H1 (cell line): ENCODE measurements at regions of chr22 and their contacts with region 1.

Region 1: DNA sequence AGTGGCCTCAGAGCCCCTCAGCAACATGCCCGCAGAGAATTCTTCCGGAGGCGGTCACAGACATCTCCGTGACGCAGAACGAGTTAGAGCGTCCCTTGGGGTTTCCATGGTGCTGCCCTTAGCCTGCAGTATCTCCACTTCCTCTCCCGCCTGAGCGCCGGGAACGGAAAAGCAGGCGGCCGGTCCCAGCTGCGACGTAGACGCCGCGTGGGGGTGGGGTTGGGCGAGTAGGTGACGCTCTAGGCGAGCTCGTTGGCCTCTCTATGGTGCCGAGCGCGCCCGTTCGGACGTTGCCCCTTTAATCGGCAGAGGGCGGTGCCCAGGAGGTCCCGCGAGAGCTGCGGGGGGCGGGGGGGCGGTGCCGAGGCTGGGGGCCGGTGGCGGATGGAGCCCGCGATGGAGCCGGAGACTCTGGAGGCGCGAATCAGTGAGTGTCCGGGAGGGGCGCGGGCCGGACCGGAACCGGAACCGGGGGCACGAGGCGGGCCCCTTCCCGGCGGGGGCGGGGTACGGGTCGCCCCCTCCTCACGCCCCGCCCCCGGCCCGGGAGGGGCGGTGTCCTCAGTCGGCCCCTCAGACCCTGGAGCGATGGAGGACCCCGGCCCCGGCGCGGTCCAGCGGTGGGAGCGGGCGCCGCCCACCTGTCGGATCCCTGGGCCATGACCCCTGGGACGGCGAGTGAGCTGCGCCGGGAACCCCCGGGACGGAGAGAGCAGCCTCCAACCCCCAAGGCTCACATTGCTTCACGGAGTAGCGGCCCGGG is at the start of gene GGA1:
- DNase-seq: peak; percentile 83 to 90
- H3K4me3 ChIP-seq: peak within 1 kb of the TSS; percentile 69 to 91 (median 82)
- H3K27ac ChIP-seq: peak within 1 kb of the TSS; percentile 93
- H3K4me1 ChIP-seq: peaks cover 0 to 8% (median 6%) of the 10 kb centered on the region in 4 experiments; a peak in 6 of 7 replicates
- H3K27me3 ChIP-seq: no peaks in the 10 kb centered on the region
- CTCF ChIP-seq: no peak; a peak in 1 of 4 replicates
- EP300 ChIP-seq: 0 out of 3 replicates have a peak, but pooled peaks of 1 of the 2 experiments have one; percentile 9
- POLR2A ChIP-seq: peak; percentile 35 to 83
- RAD21 ChIP-seq: no peak
- total RNA-seq, gene GGA1: 46.5 and 49.3 TPM in 2 replicates

Region 2: GRCh38 chr22:37538590-37539357 is 69.9 kb before region 1 on chr22:
- CTCF ChIA-PET with region 1: interaction called, 16 read pairs
- POLR2A ChIA-PET with region 1: interaction called, 3 read pairs
- DNase-seq: peak; percentile 88 to 95
- H3K4me3 ChIP-seq: no peak overlapping the region
- H3K27ac ChIP-seq: no peak overlapping the region
- H3K4me1 ChIP-seq: peaks cover 0 to 4% (median 0%) of the 10 kb centered on the region in 4 experiments; a peak in 2 of 7 replicates
- H3K27me3 ChIP-seq: no peaks in the 10 kb centered on the region; a peak in 1 of 7 replicates
- CTCF ChIP-seq: peak; percentile 99 to 100 (median 99)
- EP300 ChIP-seq: no peak
- POLR2A ChIP-seq: no peak
- RAD21 ChIP-seq: peak; percentile 100

Region 3: DNA sequence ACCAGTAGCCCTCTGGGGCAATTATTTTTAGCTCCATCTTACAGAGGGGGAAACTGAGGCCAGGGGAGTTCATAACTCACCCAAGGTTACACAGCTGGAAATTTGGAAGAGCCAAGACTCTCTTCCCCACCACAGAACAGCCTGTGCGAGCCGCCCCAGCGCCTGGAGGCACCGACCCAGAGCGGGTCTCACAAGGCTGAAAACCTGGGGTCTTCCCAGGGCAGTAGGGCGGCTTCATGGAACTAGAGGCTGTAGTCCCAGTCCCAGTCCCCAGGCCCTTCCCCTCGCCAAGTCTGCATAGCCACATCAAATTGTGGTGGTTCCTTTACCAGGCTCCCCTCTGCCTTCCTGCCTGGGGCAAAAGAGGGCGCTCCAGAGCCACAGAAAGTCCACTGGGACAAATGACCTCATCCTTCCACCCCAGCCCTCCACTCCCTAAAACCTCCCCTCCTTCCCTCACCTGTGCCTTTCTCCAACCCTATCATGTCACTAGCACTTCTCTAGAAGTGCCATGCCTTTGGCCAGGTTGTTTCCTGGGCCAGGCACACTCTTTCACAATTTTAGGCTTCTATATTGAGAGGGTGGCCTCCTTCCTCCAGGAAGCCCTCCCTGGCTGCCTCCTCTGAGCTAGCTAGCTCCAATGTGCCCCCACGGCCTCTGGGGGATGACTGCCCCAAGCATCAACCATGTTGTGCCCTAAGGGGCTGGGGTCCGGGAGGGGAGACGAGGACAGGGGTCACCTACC is 63.5 kb before region 1 on chr22:
- CTCF ChIA-PET with region 1: interaction called, 16 read pairs
- POLR2A ChIA-PET with region 1: interaction called, 5 read pairs
- DNase-seq: peak; percentile 61 to 95
- H3K4me3 ChIP-seq: peak overlapping the region in 3 of 4 experiments; percentile 15 to 57 (median 24); a peak in 4 of 8 replicates
- H3K27ac ChIP-seq: peak overlapping the region; percentile 49; the same call in 1 of the 2 replicates
- H3K4me1 ChIP-seq: peaks cover 5 to 17% (median 11%) of the 10 kb centered on the region in 4 experiments
- H3K27me3 ChIP-seq: no peaks in the 10 kb centered on the region; a peak in 1 of 7 replicates
- CTCF ChIP-seq: peak; percentile 86 to 96 (median 89)
- EP300 ChIP-seq: no peak
- POLR2A ChIP-seq: no peak
- RAD21 ChIP-seq: peak; percentile 90 to 91

Region 4: GRCh38 chr22:37594237-37594636 is 14.4 kb before region 1 on chr22:
- CTCF ChIA-PET with region 1: interaction called, 35 read pairs
- POLR2A ChIA-PET with region 1: interaction called, 12 read pairs
- DNase-seq: no peak
- H3K4me3 ChIP-seq: no peak overlapping the region
- H3K27ac ChIP-seq: no peak overlapping the region
- H3K4me1 ChIP-seq: no peaks in the 10 kb centered on the region
- H3K27me3 ChIP-seq: no peaks in the 10 kb centered on the region
- CTCF ChIP-seq: peak in 2 of 3 experiments; percentile 29 to 33; a peak in 2 of 4 replicates
- EP300 ChIP-seq: no peak
- POLR2A ChIP-seq: no peak
- RAD21 ChIP-seq: no peak

Region 5: GRCh38 chr22:37623075-37624016 is 14.7 kb after region 1 on chr22:
- CTCF ChIA-PET with region 1: interaction called, 11 read pairs
- POLR2A ChIA-PET with region 1: interaction called, 63 read pairs
- DNase-seq: peak in 1 of 2 experiments; percentile 95
- H3K4me3 ChIP-seq: no peak overlapping the region
- H3K27ac ChIP-seq: no peak overlapping the region
- H3K4me1 ChIP-seq: peaks cover 0 to 3% (median 0%) of the 10 kb centered on the region in 4 experiments; a peak in 3 of 7 replicates
- H3K27me3 ChIP-seq: no peaks in the 10 kb centered on the region
- CTCF ChIP-seq: peak; percentile 50 to 72 (median 69)
- EP300 ChIP-seq: no peak
- POLR2A ChIP-seq: no peak
- RAD21 ChIP-seq: peak; percentile 60 to 72

Region 6: GRCh38 chr22:37633625-37634416 is 25.2 kb after region 1 on chr22:
- CTCF ChIA-PET with region 1: interaction called, 35 read pairs
- POLR2A ChIA-PET with region 1: interaction called, 25 read pairs
- DNase-seq: peak; percentile 41 to 70
- H3K4me3 ChIP-seq: peak overlapping the region in 1 of 4 experiments; percentile 28; a peak in 3 of 8 replicates
- H3K27ac ChIP-seq: peak overlapping the region; percentile 65; the same call in 1 of the 2 replicates
- H3K4me1 ChIP-seq: peaks cover 5 to 27% (median 21%) of the 10 kb centered on the region in 4 experiments
- H3K27me3 ChIP-seq: no peaks in the 10 kb centered on the region
- CTCF ChIP-seq: peak; percentile 4 to 34 (median 27); a peak in 3 of 4 replicates
- EP300 ChIP-seq: no peak; a peak in 1 of 3 replicates
- POLR2A ChIP-seq: peak in 1 of 2 experiments; percentile 48; a peak in 2 of 3 replicates
- RAD21 ChIP-seq: no peak